ENCODE measurements at regions of chr4 and their contacts with region 1.

Region 1: GRCh38 chr4:123557857-123558536 is 161.4 kb downstream of the SPRY1 start:
- DNase-seq: no peak
- H3K4me3 ChIP-seq: no peak overlapping the region
- H3K27me3 ChIP-seq: no peaks in the 10 kb centered on the region
- CTCF ChIP-seq: no peak

Region 2: DNA sequence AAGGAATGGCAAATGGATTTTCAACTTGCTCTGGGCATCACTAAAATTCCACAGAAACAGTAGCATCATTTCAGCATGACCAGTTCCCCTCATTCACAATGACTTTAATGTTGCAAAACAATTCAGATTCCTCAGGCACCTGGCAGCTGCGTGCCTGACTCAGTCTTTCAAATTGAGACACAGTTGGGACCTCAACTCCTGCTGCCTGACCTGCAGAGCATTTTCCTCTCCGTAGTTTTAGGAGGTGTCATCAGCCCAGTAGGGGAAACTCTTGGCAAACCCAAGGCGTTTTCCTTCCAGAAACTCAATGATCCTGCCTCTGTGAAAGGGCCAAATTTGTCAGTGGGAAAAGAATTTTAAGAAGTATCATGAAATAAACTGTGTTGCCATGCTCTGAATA is 227.5 kb after region 1 on chr4:
- CTCF ChIA-PET with region 1: no interaction called
- POLR2A ChIA-PET with region 1: no interaction called
- DNase-seq: peak; percentile 86
- H3K4me3 ChIP-seq: no peak overlapping the region
- H3K27me3 ChIP-seq: no peaks in the 10 kb centered on the region
- CTCF ChIP-seq: no peak

Region 3: DNA sequence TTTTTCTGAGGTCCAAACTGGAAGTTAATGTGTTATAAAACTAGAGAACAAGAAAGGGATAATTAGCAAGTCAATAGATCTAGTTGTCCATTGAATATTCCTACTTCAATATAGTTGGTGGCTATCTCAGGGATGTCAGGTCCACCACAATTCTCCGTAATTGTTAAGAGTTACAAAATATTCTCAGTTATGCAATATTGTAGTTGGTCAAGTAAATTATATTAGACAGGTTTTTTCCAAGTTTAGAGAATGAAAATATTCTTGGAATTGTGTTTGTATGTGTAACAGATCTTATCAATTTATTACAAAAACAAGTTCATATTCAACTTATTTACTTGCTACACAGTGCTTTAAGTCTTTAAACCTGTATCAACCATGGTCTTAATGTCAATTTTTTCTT is 386.0 kb after region 1 on chr4:
- CTCF ChIA-PET with region 1: no interaction called
- POLR2A ChIA-PET with region 1: interaction called, 12 read pairs
- DNase-seq: no peak
- H3K4me3 ChIP-seq: no peak overlapping the region
- H3K27me3 ChIP-seq: no peaks in the 10 kb centered on the region
- CTCF ChIP-seq: no peak

Measured in BJ (cell line).